Activated T-helper 1 cell treated with anti-CD3 and anti-CD28 coated beads, Interleukin-12 subunit alpha, Interleukin-12 subunit beta, Interleukin-2, Interleukin-4 antibody, amounts not matched to agents 30 ng/mL and 10 ng/mL and 1 ng/mL, durations not matched to agents 14 hours and 24 hours and 36 hours (primary cell): ENCODE measurements at regions of chr7 and their contacts with region 1.

Region 1: DNA sequence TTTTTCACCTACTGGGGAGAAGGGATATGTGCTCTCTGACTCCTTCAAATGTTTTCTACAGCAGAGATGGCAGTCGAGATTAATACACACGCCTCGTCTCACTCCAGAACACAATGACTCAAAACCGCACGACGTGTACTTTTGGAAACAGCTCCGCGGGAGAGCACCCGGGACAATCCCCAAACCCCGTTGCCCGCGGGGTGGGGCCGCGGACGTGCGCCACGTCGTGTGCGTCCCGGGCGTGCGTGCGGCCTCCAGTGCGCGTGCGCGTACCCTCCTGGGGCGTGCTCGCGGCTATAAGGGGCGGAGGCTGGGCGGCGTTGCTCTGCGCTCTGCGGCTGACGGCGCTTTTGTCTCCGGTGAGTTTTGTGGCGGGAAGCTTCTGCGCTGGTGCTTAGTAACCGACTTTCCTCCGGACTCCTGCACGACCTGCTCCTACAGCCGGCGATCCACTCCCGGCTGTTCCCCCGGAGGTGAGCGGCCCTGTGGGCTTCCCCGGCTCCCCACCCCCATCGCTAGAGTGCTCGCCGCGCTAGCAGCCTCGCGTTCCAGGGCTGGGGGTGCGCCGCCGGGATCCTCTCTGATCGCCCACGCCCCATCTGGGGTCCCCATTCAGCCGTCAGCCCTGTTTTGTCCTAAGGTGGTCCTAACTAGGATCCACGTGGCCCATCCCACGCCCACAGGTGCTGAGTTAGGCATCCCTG is at the start of gene HILPDA:
- DNase-seq: peak; percentile 95
- H3K4me3 Mint-ChIP-seq: peak within 1 kb of the TSS; percentile 96
- H3K27ac Mint-ChIP-seq: peak within 1 kb of the TSS; percentile 99
- H3K4me1 Mint-ChIP-seq: peaks cover 67% of the 10 kb centered on the region
- H3K27me3 Mint-ChIP-seq: peaks cover 16% of the 10 kb centered on the region
- total RNA-seq, gene HILPDA: 53.7 and 56.9 TPM in 2 replicates

Region 2: DNA sequence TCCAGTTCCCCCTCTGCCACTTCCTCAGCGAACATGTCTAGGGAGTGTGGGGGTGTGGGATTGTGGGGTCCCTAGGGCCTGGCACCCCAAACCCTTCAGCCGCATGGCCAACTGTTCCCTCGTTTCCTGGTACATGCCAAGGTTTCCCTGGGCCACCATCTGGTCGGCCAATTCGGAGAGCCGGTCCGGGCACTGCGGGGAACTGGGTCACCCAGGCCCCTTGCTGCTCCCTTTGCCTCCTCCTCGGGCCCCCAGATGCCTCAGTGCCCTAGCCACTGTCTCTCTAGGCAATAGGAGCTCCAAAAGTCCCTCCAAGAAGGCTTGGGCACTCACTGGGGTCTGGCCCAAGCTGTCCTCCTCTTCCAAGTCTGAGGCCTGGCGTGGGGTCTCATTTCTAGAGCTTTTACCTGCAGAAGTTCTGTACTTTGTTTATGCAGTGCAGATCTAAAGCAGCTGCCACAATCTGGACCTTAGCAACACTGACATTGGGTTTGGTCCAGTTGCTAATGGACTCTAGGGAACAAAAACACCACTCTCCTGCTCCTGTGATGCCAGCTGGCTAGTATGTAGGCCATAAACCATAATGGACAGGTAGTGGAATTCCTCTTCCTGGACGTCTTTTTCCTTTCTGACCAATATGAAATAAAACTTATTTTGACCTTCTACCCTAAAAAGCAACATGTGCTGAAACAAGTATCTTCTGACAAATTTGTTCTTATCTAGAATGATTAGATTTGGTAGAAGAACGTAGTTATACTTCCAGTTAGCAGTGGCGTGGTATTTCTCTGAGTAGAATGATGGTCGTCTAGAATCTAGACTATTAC is 597.4 kb before region 1 on chr7:
- intact Hi-C with region 1: loop called (anchors 10 kb)
- DNase-seq: no peak
- H3K4me3 Mint-ChIP-seq: peak overlapping the region; percentile 30
- H3K27ac Mint-ChIP-seq: peak overlapping the region; percentile 52
- H3K4me1 Mint-ChIP-seq: peaks cover 67% of the 10 kb centered on the region
- H3K27me3 Mint-ChIP-seq: peaks cover 5% of the 10 kb centered on the region

Region 3: DNA sequence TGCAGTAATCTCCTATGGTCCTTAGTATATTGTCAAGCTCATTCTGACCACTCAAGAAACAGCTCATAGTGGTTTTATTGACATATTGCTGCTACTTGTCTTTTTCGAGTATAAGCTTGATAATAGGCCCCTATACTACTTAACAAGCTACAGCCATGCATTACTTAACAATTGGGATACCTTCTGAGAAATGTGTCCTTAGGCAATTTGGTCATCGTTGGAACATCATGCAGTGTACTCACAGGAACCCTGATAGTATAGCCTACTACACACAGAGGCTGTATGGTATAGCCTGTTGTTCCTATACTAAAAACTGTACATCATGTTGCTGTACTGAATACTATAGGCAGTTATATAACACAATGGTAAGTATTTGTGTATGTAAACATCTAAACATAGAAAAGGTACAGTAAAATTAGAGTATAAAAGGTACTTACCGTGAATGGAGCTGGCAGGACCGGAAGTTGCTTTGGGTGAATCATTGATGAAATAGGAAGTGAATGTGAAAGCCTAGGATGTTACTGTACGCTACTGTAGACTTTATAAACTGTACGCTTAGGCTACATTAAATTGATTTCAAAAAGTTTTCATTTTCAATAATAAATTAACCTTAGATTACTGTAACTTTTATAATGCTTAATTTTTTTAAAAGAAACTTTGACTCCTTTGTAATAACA is 585.3 kb before region 1 on chr7:
- intact Hi-C with region 1: no loop called
- DNase-seq: no peak
- H3K4me3 Mint-ChIP-seq: no peak overlapping the region
- H3K27ac Mint-ChIP-seq: no peak overlapping the region
- H3K4me1 Mint-ChIP-seq: peaks cover 5% of the 10 kb centered on the region
- H3K27me3 Mint-ChIP-seq: no peaks in the 10 kb centered on the region

Region 4: GRCh38 chr7:128031901-128032604 is 423.6 kb before region 1 on chr7:
- intact Hi-C with region 1: no loop called
- DNase-seq: peak; percentile 20
- H3K4me3 Mint-ChIP-seq: peak overlapping the region; percentile 83
- H3K27ac Mint-ChIP-seq: no peak overlapping the region
- H3K4me1 Mint-ChIP-seq: no peaks in the 10 kb centered on the region
- H3K27me3 Mint-ChIP-seq: peaks cover 23% of the 10 kb centered on the region

Region 5: DNA sequence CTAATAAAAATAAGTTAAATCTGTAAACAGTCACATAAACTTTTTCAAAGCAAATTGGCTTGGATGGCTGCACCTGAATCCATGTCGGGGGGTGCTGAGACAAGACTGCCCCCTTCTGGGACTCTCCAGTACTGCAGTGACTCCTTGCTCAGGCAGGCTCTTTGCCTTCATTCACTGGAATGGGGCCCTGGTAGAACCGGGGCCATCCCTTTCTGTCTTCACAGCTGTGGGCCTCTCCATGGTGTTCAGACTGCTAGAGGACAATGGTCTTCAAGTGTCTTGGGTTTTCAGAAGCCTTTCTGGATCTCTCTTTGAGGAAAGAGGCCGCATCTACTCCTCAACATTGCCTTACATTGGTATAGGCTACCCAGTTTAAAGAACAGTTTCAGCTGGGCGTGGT is 29.9 kb before region 1 on chr7:
- intact Hi-C with region 1: loop called (anchors 1 kb)
- DNase-seq: peak; percentile 68
- H3K4me3 Mint-ChIP-seq: no peak overlapping the region
- H3K27ac Mint-ChIP-seq: no peak overlapping the region
- H3K4me1 Mint-ChIP-seq: peaks cover 22% of the 10 kb centered on the region
- H3K27me3 Mint-ChIP-seq: peaks cover 6% of the 10 kb centered on the region

Region 6: GRCh38 chr7:128739048-128739962 is 283.6 kb after region 1 on chr7 and contains the start of gene CALU:
- intact Hi-C with region 1: loop called (anchors 5 kb)
- DNase-seq: peak; percentile 95
- H3K4me3 Mint-ChIP-seq: peak within 1 kb of the TSS; percentile 100
- H3K27ac Mint-ChIP-seq: peak within 1 kb of the TSS; percentile 99
- H3K4me1 Mint-ChIP-seq: peaks cover 26% of the 10 kb centered on the region
- H3K27me3 Mint-ChIP-seq: no peaks in the 10 kb centered on the region
- total RNA-seq, gene CALU: 52.8 and 59.2 TPM in 2 replicates

Region 7: DNA sequence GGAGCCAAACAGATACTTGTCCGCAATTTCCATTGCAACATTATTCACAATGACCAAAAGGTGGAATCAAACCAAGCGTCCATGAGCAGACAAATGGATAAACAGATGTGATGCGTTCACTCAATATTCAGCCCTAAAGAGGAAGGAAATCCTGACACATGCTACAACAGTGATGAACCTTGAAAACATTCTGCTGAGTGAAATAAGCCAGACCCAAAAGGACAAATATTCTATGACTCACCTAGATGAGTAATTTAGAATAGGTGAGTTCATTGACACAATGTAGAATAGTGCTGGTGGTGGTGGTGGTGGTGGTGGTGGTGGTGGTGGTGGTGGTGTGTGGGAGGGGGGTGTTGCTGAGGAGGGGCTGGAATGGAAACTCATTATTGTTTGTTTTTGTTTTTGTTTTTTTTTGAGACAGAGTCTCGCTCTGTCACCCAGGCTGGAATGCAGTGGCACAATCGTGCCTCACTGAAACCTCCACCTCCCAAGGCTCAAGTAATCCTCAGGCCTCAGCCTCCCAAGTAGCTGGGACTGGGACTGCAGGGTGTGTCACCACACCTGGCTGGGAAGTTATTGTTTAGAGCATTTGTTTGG is 1075.2 kb after region 1 on chr7:
- intact Hi-C with region 1: loop called (anchors 10 kb)
- DNase-seq: peak; percentile 8
- H3K4me3 Mint-ChIP-seq: no peak overlapping the region
- H3K27ac Mint-ChIP-seq: peak overlapping the region; percentile 79
- H3K4me1 Mint-ChIP-seq: peaks cover 12% of the 10 kb centered on the region
- H3K27me3 Mint-ChIP-seq: no peaks in the 10 kb centered on the region